CD4-positive, alpha-beta memory T cell (primary cell): ENCODE measurements at regions of chr2 and their contacts with region 1.

Region 1: GRCh38 chr2:207529330-207530159 is at the start of gene CREB1:
- DNase-seq: peak; percentile 99 to 100 (median 100)
- H3K4me3 ChIP-seq: peak within 1 kb of the TSS; percentile 86 to 89
- H3K4me3 Mint-ChIP-seq: peak within 1 kb of the TSS; percentile 96 to 99 (median 98)
- H3K27ac ChIP-seq: peak within 1 kb of the TSS; percentile 99
- H3K27ac Mint-ChIP-seq: peak within 1 kb of the TSS; percentile 98 to 100 (median 100)
- H3K4me1 ChIP-seq: peaks cover 75% of the 10 kb centered on the region
- H3K4me1 Mint-ChIP-seq: peaks cover 47 to 94% (median 59%) of the 10 kb centered on the region in 4 donors
- H3K27me3 ChIP-seq: no peaks in the 10 kb centered on the region
- H3K27me3 Mint-ChIP-seq: peaks cover 0 to 3% of the 10 kb centered on the region in 2 donors
- total RNA-seq, gene CREB1: 128 TPM

Region 2: GRCh38 chr2:206765242-206766056 is 764.1 kb before region 1 on chr2 and contains the starts of genes FASTKD2 and MDH1B:
- CTCF ChIA-PET with region 1: no interaction called
- POLR2A ChIA-PET with region 1: interaction called, 9 read pairs
- intact Hi-C with region 1: loop called (anchors 2 kb)
- DNase-seq: peak; percentile 88 to 91 (median 89)
- H3K4me3 ChIP-seq: peak within 1 kb of the TSS; percentile 54 to 82
- H3K4me3 Mint-ChIP-seq: peak within 1 kb of the TSS; percentile 89 to 98 (median 95)
- H3K27ac ChIP-seq: peak within 1 kb of the TSS; percentile 91
- H3K27ac Mint-ChIP-seq: peak within 1 kb of the TSS; percentile 96 to 99 (median 97)
- H3K4me1 ChIP-seq: peaks cover 39% of the 10 kb centered on the region
- H3K4me1 Mint-ChIP-seq: peaks cover 20 to 45% (median 36%) of the 10 kb centered on the region in 4 donors
- H3K27me3 ChIP-seq: no peaks in the 10 kb centered on the region
- H3K27me3 Mint-ChIP-seq: no peaks in the 10 kb centered on the region
- total RNA-seq, gene FASTKD2: 23.0 to 23.4 TPM
- total RNA-seq, gene MDH1B: 0.17 TPM in 1 of 2 experiments, not detected in the other

Region 3: GRCh38 chr2:207473049-207473930 is 56.3 kb before region 1 on chr2:
- CTCF ChIA-PET with region 1: interaction called, 3 read pairs
- POLR2A ChIA-PET with region 1: interaction called, 3 read pairs
- intact Hi-C with region 1: loop called (anchors 1 kb)
- DNase-seq: peak; percentile 22 to 39 (median 38)
- H3K4me3 ChIP-seq: no peak overlapping the region
- H3K4me3 Mint-ChIP-seq: no peak overlapping the region
- H3K27ac ChIP-seq: no peak overlapping the region
- H3K27ac Mint-ChIP-seq: peak overlapping the region in 1 of 7 donors; percentile 32
- H3K4me1 ChIP-seq: peaks cover 6% of the 10 kb centered on the region
- H3K4me1 Mint-ChIP-seq: peaks cover 4 to 11% (median 9%) of the 10 kb centered on the region in 4 donors
- H3K27me3 ChIP-seq: no peaks in the 10 kb centered on the region
- H3K27me3 Mint-ChIP-seq: no peaks in the 10 kb centered on the region

Region 4: DNA sequence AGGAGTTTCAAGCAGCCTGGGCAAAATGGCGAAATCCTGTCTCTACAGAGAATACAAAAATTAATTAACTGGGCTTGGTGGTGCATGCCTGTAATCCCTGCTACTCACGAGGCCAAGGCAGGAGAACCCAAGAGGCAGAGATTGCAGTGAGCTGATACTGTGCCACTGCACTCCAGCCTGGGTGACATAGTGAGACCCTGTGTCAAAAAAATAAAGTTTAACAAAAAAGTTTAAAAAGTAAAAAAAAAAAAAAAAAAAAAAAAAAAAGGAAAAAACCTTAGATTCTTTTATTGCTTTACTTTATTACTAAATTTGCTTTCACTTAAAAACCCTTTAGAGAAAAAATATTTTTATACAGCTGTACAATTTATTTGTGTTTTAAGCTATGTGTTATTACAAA is 10.9 kb after region 1 on chr2:
- CTCF ChIA-PET with region 1: interaction called, 6 read pairs
- POLR2A ChIA-PET with region 1: interaction called, 61 read pairs
- intact Hi-C with region 1: no loop called
- DNase-seq: no peak
- H3K4me3 ChIP-seq: no peak overlapping the region
- H3K4me3 Mint-ChIP-seq: peak overlapping the region in 3 of 8 donors; percentile 0 to 33 (median 19)
- H3K27ac ChIP-seq: no peak overlapping the region
- H3K27ac Mint-ChIP-seq: peak overlapping the region in 2 of 7 donors; percentile 19 to 87
- H3K4me1 ChIP-seq: peaks cover 70% of the 10 kb centered on the region
- H3K4me1 Mint-ChIP-seq: peaks cover 43 to 83% (median 62%) of the 10 kb centered on the region in 4 donors
- H3K27me3 ChIP-seq: no peaks in the 10 kb centered on the region
- H3K27me3 Mint-ChIP-seq: no peaks in the 10 kb centered on the region

Region 5: DNA sequence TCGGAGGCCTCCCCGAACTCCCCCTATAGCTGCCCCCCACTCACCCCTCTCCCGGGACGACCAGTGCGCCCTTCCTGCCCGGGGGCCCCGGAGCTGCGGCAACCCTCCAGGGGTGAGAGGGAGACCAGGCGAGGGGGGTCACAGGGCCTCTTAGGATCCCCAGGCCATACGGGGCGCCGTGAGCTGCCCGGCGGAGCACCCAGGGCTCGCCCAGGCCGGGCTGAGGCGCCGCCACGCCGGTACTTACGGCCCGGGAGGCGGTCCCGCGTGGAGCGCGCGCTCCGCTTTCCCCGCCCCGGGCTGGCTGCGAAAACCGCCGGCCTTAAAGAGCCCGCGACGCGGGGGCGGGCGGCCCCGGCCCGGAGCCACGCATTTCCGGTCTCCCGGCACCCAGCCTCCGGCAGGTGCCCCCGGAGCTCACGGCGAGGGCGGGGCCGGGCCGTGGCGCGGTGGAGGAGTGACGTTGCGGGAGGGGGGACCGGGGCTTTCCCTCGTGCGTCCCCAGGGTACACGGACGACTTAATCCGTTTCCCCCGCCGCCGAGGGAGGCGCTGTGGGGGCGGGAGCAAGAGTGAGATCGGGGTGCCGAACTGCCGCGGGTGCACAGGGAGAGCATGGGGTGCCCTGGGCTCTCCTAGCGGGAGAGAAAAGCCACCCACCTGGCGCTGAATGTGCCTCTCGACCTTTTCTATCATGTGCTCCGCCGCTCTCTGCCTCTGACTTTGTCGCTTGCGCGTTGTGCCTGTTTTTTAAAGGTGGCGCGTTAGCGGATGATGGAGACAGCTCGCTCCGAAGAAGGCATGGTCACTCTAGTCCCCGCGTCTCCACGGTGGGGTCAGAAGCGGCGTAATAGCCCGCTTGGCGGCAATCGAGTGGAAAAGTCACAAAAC is 95.7 kb after region 1 on chr2 and contains the start of gene METTL21A:
- CTCF ChIA-PET with region 1: interaction called, 25 read pairs
- POLR2A ChIA-PET with region 1: interaction called, 223 read pairs
- intact Hi-C with region 1: loop called (anchors 1 kb)
- DNase-seq: peak; percentile 96 to 97 (median 97)
- H3K4me3 ChIP-seq: peak within 1 kb of the TSS; percentile 89 to 90
- H3K4me3 Mint-ChIP-seq: peak within 1 kb of the TSS; percentile 94 to 96 (median 95)
- H3K27ac ChIP-seq: peak within 1 kb of the TSS; percentile 97
- H3K27ac Mint-ChIP-seq: peak within 1 kb of the TSS; percentile 92 to 99 (median 97)
- H3K4me1 ChIP-seq: peaks cover 31% of the 10 kb centered on the region
- H3K4me1 Mint-ChIP-seq: peaks cover 16 to 46% (median 31%) of the 10 kb centered on the region in 4 donors
- H3K27me3 ChIP-seq: no peaks in the 10 kb centered on the region
- H3K27me3 Mint-ChIP-seq: no peaks in the 10 kb centered on the region
- total RNA-seq, gene METTL21A: 16.6 to 16.9 TPM

Region 6: GRCh38 chr2:207640661-207641060 is 111.1 kb after region 1 on chr2:
- CTCF ChIA-PET with region 1: no interaction called
- POLR2A ChIA-PET with region 1: no interaction called
- intact Hi-C with region 1: no loop called
- DNase-seq: no peak
- H3K4me3 ChIP-seq: no peak overlapping the region
- H3K4me3 Mint-ChIP-seq: no peak overlapping the region
- H3K27ac ChIP-seq: no peak overlapping the region
- H3K27ac Mint-ChIP-seq: no peak overlapping the region
- H3K4me1 ChIP-seq: no peaks in the 10 kb centered on the region
- H3K4me1 Mint-ChIP-seq: no peaks in the 10 kb centered on the region
- H3K27me3 ChIP-seq: no peaks in the 10 kb centered on the region
- H3K27me3 Mint-ChIP-seq: peaks cover 9 to 10% of the 10 kb centered on the region in 2 donors

Region 7: DNA sequence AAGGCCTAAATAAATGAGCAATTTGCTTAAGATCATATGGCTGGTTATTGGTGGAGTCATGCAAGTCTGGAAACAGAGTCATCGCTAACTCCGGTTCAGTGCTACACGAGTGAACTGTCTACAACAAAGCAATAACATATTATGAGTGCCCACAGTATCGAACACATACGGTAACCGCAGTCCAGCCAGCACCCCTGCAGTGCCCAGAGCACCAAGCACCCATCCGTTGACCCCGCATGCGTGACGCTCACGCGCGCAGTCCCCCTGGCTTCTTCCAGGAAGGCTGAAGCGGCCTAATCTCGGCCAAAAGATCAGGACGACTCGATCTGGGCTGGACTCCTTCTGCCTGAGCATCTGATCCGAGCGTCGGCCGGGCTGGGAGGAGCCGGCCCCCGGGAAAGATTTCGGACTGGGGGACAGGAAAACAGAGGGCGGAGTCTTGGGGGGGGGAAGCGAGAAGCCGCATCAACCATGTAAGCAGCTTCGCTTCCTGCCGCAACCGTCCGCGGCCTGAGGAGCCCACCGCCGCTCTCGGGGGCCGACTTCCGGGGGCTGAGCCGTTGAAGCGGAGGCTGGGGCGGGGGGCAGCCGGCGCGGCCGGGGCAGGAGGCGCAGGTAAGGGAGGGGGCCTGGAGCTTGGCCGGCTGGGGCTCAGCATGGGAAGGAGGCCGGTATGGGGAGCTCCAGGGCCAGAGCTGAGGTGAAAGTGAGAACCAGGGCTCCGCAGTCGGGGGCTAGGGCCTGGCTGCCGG is 736.4 kb after region 1 on chr2 and contains the start of gene PIKFYVE:
- CTCF ChIA-PET with region 1: no interaction called
- POLR2A ChIA-PET with region 1: interaction called, 9 read pairs
- intact Hi-C with region 1: loop called (anchors 5 kb)
- DNase-seq: peak; percentile 80 to 92 (median 87)
- H3K4me3 ChIP-seq: peak within 1 kb of the TSS; percentile 51 to 95
- H3K4me3 Mint-ChIP-seq: peak within 1 kb of the TSS; percentile 92 to 99 (median 96)
- H3K27ac ChIP-seq: peak within 1 kb of the TSS; percentile 75
- H3K27ac Mint-ChIP-seq: peak within 1 kb of the TSS; percentile 86 to 97 (median 95)
- H3K4me1 ChIP-seq: peaks cover 46% of the 10 kb centered on the region
- H3K4me1 Mint-ChIP-seq: peaks cover 27 to 60% (median 39%) of the 10 kb centered on the region in 4 donors
- H3K27me3 ChIP-seq: no peaks in the 10 kb centered on the region
- H3K27me3 Mint-ChIP-seq: no peaks in the 10 kb centered on the region
- total RNA-seq, gene PIKFYVE: 44.5 to 45.8 TPM

Region 8: DNA sequence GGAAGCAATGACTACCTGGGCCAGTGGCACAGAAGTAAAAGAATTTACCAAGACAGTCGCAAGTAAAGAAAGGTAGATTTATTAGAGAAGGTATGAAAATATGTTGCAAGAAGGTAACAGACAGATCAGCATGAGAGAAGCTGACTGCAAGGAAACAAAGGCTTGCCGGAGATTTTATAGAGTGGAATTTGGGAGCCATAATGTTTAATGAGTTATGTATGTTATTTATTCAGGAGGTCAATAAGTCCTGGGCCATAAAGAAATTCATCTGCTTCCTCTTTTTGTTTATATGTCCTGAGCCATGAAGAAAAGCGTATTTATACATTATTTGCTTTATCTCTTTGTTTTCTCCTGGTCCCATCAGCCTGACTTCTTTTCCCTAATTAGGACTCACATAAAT is 1300.7 kb after region 1 on chr2:
- CTCF ChIA-PET with region 1: no interaction called
- POLR2A ChIA-PET with region 1: no interaction called
- intact Hi-C with region 1: no loop called
- DNase-seq: no peak
- H3K4me3 ChIP-seq: no peak overlapping the region
- H3K4me3 Mint-ChIP-seq: no peak overlapping the region
- H3K27ac ChIP-seq: no peak overlapping the region
- H3K27ac Mint-ChIP-seq: no peak overlapping the region
- H3K4me1 ChIP-seq: no peaks in the 10 kb centered on the region
- H3K4me1 Mint-ChIP-seq: no peaks in the 10 kb centered on the region
- H3K27me3 ChIP-seq: no peaks in the 10 kb centered on the region
- H3K27me3 Mint-ChIP-seq: no peaks in the 10 kb centered on the region